K562 (cell line): ENCODE measurements at regions of chr7 and their contacts with region 1.

Region 1: GRCh38 chr7:118029826-118030422 is 154.0 kb upstream of the LSM8 start:
- DNase-seq: no peak
- ATAC-seq: no peak
- H3K4me3 ChIP-seq: no peak overlapping the region
- H3K27ac ChIP-seq: no peak overlapping the region
- H3K4me1 ChIP-seq: no peaks in the 10 kb centered on the region
- H3K27me3 ChIP-seq: no peaks in the 10 kb centered on the region
- CTCF ChIP-seq: no peak
- EP300 ChIP-seq: no peak
- POLR2A ChIP-seq: no peak
- RAD21 ChIP-seq: no peak

Region 2: DNA sequence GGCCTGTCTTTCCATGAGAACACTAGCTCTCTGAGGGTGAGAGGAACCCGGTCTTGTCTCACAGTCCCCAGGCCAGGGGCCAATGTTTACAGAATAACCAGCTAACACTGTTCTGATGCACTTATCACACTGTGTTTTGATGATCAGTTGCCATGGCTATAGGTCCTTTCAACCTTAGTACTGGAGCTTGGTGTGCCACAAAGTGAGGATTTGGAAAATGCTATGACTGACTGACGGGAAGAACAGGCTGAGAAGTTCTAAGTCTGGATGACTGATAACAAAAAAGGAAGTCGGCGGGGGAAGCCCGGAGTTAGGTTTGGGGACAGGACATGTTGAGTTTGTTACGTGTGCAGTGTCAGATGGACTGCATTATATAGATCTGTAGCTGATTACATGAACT is 298.5 kb before region 1 on chr7:
- CTCF ChIA-PET with region 1: no interaction called
- POLR2A ChIA-PET with region 1: no interaction called
- in situ Hi-C with region 1: no loop called
- intact Hi-C with region 1: no loop called
- DNase-seq: peak in 2 of 4 experiments; percentile 13 to 50
- ATAC-seq: peak; percentile 67
- H3K4me3 ChIP-seq: no peak overlapping the region
- H3K27ac ChIP-seq: no peak overlapping the region
- H3K4me1 ChIP-seq: no peaks in the 10 kb centered on the region; a peak in 1 of 5 replicates
- H3K27me3 ChIP-seq: peaks cover 10 to 28% of the 10 kb centered on the region in 2 experiments; a peak in 4 of 5 replicates
- CTCF ChIP-seq: no peak
- EP300 ChIP-seq: no peak
- POLR2A ChIP-seq: no peak
- RAD21 ChIP-seq: no peak

Region 3: DNA sequence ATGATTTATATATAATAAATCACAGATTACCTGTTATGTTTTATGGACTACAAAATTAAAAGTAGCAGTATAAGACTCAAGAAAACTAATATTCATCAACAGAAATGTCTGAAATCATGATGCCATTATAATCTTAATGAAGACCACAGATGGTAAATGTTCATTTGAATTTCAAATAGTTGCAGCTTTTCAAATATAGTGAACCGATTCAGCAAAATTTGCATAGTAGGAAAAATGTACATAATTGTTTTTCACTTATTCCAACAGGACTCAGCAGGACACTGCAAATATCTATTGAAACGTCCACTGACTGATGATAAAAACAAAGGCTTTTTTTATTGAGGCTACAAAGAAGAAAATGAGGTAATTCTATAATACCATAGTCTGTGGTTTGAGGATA is 102.8 kb after region 1 on chr7:
- CTCF ChIA-PET with region 1: no interaction called
- POLR2A ChIA-PET with region 1: no interaction called
- in situ Hi-C with region 1: no loop called
- intact Hi-C with region 1: loop called (anchors 5 kb)
- DNase-seq: no peak
- ATAC-seq: no peak
- H3K4me3 ChIP-seq: no peak overlapping the region
- H3K27ac ChIP-seq: no peak overlapping the region
- H3K4me1 ChIP-seq: no peaks in the 10 kb centered on the region
- H3K27me3 ChIP-seq: no peaks in the 10 kb centered on the region
- CTCF ChIP-seq: no peak
- EP300 ChIP-seq: no peak
- POLR2A ChIP-seq: no peak
- RAD21 ChIP-seq: no peak